ENCODE measurements at regions of chr7 and their contacts with region 1.

Region 1: GRCh38 chr7:37495574-37496184 is 47.0 kb upstream of the ELMO1 start:
- DNase-seq: peak in 2 of 5 donors; percentile 14 to 32
- H3K4me3 ChIP-seq: no peak overlapping the region
- H3K4me3 Mint-ChIP-seq: no peak overlapping the region
- H3K27ac ChIP-seq: no peak overlapping the region
- H3K27ac Mint-ChIP-seq: no peak overlapping the region
- H3K4me1 ChIP-seq: no peaks in the 10 kb centered on the region
- H3K4me1 Mint-ChIP-seq: no peaks in the 10 kb centered on the region
- H3K27me3 ChIP-seq: no peaks in the 10 kb centered on the region
- H3K27me3 Mint-ChIP-seq: no peaks in the 10 kb centered on the region

Region 2: DNA sequence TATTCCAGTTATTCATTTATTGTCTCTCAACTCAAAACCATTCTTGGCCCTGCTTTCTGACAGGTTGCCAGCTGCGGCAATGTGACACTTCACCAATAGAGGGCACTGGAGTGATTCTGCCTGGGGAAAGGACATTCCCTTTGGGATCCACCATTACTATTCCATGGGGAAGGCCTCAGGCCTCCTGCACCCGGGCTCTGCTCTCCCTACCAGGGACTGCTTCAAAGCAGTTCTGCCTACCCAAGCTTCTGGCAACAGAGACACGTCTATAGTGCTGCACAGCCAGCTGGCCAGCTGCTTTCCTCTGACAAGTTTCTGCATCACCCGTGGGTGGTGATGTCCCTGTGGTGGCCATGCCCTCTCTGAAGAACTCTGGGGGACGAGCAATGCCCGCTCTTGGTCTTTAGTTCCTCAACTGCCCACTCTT is 210.9 kb before region 1 on chr7:
- CTCF ChIA-PET with region 1: interaction called, 13 read pairs
- POLR2A ChIA-PET with region 1: no interaction called
- DNase-seq: peak; percentile 13 to 56 (median 17)
- H3K4me3 ChIP-seq: no peak overlapping the region
- H3K4me3 Mint-ChIP-seq: no peak overlapping the region
- H3K27ac ChIP-seq: no peak overlapping the region
- H3K27ac Mint-ChIP-seq: peak overlapping the region in 7 of 8 donors; percentile 23 to 61 (median 40)
- H3K4me1 ChIP-seq: peaks cover 13% of the 10 kb centered on the region
- H3K4me1 Mint-ChIP-seq: peaks cover 39 to 60% (median 53%) of the 10 kb centered on the region in 3 donors
- H3K27me3 ChIP-seq: no peaks in the 10 kb centered on the region
- H3K27me3 Mint-ChIP-seq: peaks cover 0 to 3% of the 10 kb centered on the region in 2 donors

Region 3: DNA sequence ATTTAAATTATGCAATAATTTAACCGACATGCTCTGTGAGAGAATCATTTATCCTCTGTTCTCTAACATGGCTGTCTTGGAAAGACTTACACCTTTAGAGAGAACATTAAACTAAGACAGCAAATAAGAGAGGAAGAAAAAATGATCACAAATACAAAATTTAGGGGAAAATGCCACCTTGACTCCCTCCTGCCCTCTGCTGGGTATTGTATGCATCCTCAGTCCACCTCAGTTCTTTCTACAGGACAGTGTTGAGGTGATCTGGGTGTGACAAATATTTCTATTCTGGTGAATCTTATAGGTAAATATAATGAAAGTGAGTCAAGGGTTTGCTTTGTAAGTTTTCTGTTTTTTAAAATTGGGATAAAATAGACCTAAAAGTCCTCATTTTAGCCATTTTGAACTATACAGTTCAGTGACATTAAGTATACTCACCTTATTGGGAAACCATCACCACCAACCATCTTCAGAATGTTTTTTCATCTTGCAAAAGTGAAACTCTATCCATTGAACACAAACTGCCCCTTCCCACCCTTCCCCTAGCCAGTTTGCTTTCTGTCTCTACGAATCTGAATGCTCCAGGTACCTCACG is 14.5 kb after region 1 on chr7:
- CTCF ChIA-PET with region 1: interaction called, 25 read pairs
- POLR2A ChIA-PET with region 1: interaction called, 3 read pairs
- DNase-seq: peak in 1 of 5 donors; percentile 6
- H3K4me3 ChIP-seq: no peak overlapping the region
- H3K4me3 Mint-ChIP-seq: no peak overlapping the region
- H3K27ac ChIP-seq: no peak overlapping the region
- H3K27ac Mint-ChIP-seq: no peak overlapping the region
- H3K4me1 ChIP-seq: no peaks in the 10 kb centered on the region
- H3K4me1 Mint-ChIP-seq: no peaks in the 10 kb centered on the region
- H3K27me3 ChIP-seq: peaks cover 3% of the 10 kb centered on the region
- H3K27me3 Mint-ChIP-seq: peaks cover 5 to 35% of the 10 kb centered on the region in 2 donors